PC-9 (cell line): ENCODE measurements at regions of chr6 and their contacts with region 1.

Region 1: GRCh38 chr6:145963216-145964068 is 716 bp downstream of the SHPRH start:
- DNase-seq: peak in 1 of 2 experiments; percentile 15
- H3K4me3 ChIP-seq: peak overlapping the region; percentile 82
- H3K27ac ChIP-seq: 0 out of 2 replicates have a peak overlapping the region, but pooled peaks have one; percentile 16
- H3K4me1 ChIP-seq: peaks cover 22% of the 10 kb centered on the region
- H3K27me3 ChIP-seq: no peaks in the 10 kb centered on the region
- CTCF ChIP-seq: no peak

Region 2: DNA sequence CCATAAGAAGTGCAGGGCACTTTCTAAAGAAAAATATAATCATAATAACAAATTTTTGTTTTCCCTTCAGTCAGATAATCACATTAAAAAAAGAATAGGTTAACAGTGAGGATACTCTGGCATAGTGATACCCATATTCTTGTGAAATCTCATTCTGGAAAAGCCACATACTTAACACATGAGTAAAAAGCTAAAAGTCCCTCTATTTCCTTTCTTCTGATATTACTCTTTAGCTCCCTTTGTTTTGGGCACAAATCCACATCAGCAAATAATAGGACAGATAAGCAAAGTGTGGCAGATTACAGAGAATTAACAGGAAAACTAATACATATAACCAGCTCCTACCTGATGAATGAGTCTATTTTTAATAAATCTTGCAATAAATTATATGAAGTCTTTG is 15.1 kb before region 1 on chr6:
- CTCF ChIA-PET with region 1: no interaction called
- POLR2A ChIA-PET with region 1: interaction called, 10 read pairs
- intact Hi-C with region 1: no loop called
- DNase-seq: peak in 1 of 2 experiments; percentile 75
- H3K4me3 ChIP-seq: no peak overlapping the region
- H3K27ac ChIP-seq: peak overlapping the region; percentile 58
- H3K4me1 ChIP-seq: peaks cover 14% of the 10 kb centered on the region
- H3K27me3 ChIP-seq: no peaks in the 10 kb centered on the region
- CTCF ChIP-seq: no peak